ENCODE measurements at regions of chr14 and their contacts with region 1.

Region 1: DNA sequence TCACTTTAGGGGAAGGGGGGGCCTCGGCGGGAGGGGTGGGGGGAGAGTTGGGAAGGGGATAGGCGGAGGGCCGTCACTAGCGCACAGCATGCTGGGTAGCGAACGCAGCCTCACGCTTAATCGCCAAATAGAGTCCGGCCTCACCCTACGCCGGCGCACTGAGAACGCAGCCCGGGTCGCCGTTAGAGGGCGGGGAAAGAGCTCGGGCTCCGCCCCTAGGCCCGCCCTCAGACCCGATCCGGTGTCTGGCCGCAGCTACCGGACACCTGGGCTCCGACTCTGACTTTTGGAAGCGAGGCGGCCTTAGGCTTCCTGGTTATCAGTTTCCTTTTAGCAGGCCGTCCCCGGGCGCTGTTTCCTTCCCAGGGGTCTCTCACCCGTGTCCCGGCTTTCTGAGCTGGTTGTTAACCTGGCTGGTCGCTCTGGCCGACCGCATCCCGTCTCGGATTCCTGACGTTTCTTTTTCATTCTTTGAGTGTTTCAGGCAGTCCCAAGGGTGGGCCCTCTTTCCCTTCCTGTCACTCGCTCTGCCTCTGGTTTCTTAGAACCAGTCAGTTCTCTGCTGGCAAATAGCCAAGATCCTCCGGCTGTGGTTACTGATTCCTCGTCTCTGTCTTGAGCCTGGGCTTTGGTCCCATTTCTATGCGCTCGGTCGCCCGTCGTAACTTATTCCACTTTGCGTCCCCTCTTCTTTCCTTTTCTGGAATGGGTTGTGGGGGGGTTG is 378 bp upstream of the STRN3 start:
- DNase-seq: peak; percentile 89
- H3K4me3 Mint-ChIP-seq: peak overlapping the region; percentile 93
- H3K27ac Mint-ChIP-seq: peak overlapping the region; percentile 92
- H3K4me1 Mint-ChIP-seq: peaks cover 51% of the 10 kb centered on the region
- H3K27me3 Mint-ChIP-seq: no peaks in the 10 kb centered on the region

Region 2: DNA sequence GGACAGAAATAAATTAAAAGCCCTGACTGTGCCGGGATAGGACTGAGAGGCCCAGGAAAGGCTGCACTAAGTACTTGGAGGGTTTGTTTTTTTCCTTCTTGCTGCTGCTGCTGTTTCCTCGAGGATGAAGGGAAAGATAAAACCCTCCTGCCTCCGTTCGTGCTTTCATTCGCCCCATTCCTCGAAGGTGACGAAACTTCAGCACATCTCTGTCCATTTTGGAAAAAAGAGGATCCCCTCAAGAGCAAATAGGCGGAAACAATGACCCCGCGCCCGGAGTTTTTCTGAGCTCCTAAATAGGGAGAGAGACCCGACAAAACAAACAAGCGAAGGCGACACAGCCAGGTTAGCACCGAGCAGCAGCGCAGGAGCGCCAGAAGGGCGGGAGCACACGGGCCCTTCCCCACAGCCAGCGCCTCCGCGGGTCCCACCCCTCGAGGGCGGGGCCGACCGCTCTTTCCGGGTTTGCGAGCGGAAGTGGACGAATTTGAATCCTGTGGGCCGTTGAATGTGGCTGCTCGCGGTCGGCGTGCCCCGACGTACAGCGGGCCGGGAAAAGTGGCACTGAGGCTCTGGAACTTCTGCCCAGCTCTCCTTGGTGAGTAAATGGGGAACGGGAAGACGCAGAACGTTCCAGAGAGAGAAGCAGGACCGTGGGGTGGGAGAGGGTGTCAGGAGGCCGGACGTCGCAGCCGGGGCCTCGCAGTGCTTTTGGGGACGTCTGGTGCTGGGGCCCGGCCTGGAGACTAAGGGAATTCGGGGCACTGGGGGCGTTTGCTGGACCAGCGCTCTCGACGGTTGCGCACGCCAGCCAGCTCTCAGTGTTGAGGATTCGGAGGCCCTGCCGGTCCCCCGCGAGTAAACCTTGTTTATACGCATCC is 467.6 kb before region 1 on chr14 and contains the start of gene G2E3:
- intact Hi-C with region 1: loop called (anchors 2 kb)
- DNase-seq: peak; percentile 89
- H3K4me3 Mint-ChIP-seq: peak within 1 kb of the TSS; percentile 99
- H3K27ac Mint-ChIP-seq: peak within 1 kb of the TSS; percentile 100
- H3K4me1 Mint-ChIP-seq: peaks cover 25% of the 10 kb centered on the region
- H3K27me3 Mint-ChIP-seq: no peaks in the 10 kb centered on the region
- total RNA-seq, gene G2E3: 24.7 and 26.4 TPM in 2 replicates

Region 3: GRCh38 chr14:30621940-30622830 is 404.4 kb before region 1 on chr14 and contains the start of gene SCFD1:
- intact Hi-C with region 1: loop called (anchors 5 kb)
- DNase-seq: peak; percentile 93
- H3K4me3 Mint-ChIP-seq: peak within 1 kb of the TSS; percentile 95
- H3K27ac Mint-ChIP-seq: peak within 1 kb of the TSS; percentile 94
- H3K4me1 Mint-ChIP-seq: peaks cover 29% of the 10 kb centered on the region
- H3K27me3 Mint-ChIP-seq: no peaks in the 10 kb centered on the region
- total RNA-seq, gene SCFD1: 72.8 and 76.1 TPM in 2 replicates

Region 4: DNA sequence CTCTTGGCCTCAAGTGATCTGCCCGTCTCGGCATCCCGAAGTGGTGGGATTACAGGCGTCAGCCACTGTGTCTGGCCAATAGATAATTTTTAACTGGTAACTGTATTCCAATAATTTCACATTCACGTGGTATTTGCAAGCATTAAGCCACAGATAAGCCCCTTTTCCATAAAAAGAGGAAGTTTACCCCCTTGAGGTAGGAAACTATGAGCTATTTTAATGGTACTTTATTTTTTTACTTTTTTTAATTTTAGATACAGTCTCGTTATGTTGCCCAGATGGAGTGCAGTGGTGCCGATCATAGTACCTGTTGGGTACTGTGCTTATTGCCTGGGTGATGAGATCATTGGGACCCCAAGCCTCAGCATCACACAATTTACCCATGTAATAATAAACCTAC is 44.0 kb before region 1 on chr14:
- intact Hi-C with region 1: loop called (anchors 5 kb)
- DNase-seq: no peak
- H3K4me3 Mint-ChIP-seq: no peak overlapping the region
- H3K27ac Mint-ChIP-seq: no peak overlapping the region
- H3K4me1 Mint-ChIP-seq: peaks cover 1% of the 10 kb centered on the region
- H3K27me3 Mint-ChIP-seq: no peaks in the 10 kb centered on the region

Region 5: GRCh38 chr14:31084385-31084784 is 57.8 kb after region 1 on chr14:
- intact Hi-C with region 1: loop called (anchors 5 kb)
- DNase-seq: no peak
- H3K4me3 Mint-ChIP-seq: no peak overlapping the region
- H3K27ac Mint-ChIP-seq: no peak overlapping the region
- H3K4me1 Mint-ChIP-seq: no peaks in the 10 kb centered on the region
- H3K27me3 Mint-ChIP-seq: no peaks in the 10 kb centered on the region

Region 6: DNA sequence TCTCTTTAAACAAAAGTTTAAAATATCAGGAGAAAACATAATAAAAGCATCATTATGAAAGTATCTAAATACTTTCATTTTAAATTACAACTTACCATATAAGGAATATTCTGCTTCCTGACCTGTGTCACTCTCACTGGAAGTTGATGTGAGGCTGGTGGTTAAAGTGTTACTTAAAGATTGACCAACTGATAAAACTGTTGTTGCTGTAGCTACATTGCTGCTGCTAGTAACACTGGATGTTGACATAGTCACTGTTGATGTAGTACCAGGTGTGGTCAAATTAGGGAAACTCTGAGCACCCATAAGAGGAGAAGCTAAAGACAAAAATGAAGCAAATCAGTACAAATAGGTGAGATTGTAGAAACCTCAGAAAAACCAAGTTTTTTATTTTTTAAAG is 101.1 kb after region 1 on chr14:
- intact Hi-C with region 1: loop called (anchors 2 kb)
- DNase-seq: peak; percentile 53
- H3K4me3 Mint-ChIP-seq: no peak overlapping the region
- H3K27ac Mint-ChIP-seq: peak overlapping the region; percentile 44
- H3K4me1 Mint-ChIP-seq: peaks cover 35% of the 10 kb centered on the region
- H3K27me3 Mint-ChIP-seq: no peaks in the 10 kb centered on the region

Region 7: DNA sequence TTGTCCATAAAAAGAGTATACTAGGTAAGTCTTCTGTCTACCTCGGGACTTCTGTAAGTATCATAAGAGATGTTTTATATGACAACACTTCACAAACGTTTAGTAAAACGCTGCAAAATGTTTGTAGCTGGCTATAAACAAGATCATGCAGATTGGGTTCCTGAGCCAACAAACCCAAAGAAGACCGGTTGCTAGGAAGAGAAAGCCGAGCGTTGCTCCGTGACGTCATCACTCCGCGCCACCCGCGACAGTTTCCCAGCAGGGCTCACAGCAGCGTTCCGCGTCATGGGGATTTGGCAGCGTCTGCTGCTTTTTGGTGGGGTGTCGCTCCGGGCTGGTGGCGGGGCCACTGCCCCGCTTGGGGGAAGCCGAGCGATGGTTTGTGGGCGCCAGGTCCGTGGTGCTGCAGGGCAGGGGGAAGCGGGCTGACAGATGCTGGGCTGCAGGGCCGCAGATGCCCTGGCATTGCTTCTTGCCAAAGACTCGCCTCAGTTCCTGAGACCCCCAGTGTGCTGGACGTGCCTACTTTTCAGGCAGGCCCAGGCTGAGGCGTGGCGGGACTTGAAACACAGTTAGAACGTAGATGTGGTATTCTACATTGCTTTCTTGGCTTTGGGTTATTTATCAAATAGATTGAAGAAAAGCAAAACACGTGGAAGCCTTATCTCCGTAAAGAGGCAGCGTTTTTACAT is 534.7 kb after region 1 on chr14 and contains the start of gene NUBPL:
- intact Hi-C with region 1: loop called (anchors 10 kb)
- DNase-seq: peak; percentile 96
- H3K4me3 Mint-ChIP-seq: peak within 1 kb of the TSS; percentile 90
- H3K27ac Mint-ChIP-seq: peak within 1 kb of the TSS; percentile 95
- H3K4me1 Mint-ChIP-seq: peaks cover 21% of the 10 kb centered on the region
- H3K27me3 Mint-ChIP-seq: peaks cover 8% of the 10 kb centered on the region
- total RNA-seq, gene NUBPL: 8.7 and 9.5 TPM in 2 replicates